ENCODE measurements at regions of chr5 and their contacts with region 1.

Region 1: DNA sequence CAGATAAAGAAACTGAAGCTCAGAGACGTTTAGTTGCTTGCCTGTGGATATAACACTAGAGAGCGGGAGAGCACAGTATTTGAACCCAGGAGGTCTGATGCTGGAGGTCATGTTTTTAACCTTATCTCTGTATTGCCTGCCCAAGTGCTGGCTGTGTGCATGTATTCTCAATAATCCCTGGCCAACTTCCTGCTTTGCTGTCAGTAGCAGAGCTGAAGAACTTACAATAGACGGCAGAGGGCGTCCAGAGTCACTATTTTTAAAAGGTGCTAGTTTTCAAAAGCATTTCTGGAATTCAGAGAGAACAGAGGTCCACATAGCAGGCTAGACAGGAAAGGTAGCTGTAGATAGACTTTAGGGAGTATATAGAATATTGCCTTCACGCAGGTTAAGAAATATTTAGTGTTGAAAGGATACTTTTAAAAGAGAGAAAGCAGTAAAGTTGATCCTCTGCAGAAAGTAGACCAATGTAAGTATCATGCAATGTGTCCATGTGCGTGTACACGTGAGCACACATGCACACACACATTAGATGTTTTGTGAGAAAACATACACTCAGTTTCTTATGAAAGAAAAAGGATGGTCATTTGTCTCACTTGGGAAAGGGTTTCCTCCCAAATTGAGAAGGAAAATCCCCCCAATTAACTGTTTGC is 46.3 kb downstream of the PTCD2 start:
- DNase-seq: no peak
- H3K4me3 ChIP-seq: no peak overlapping the region
- H3K27me3 ChIP-seq: no peaks in the 10 kb centered on the region
- CTCF ChIP-seq: peak; percentile 80

Region 2: GRCh38 chr5:72378636-72379290 is 12.3 kb after region 1 on chr5:
- CTCF ChIA-PET with region 1: interaction called, 24 read pairs
- POLR2A ChIA-PET with region 1: no interaction called
- DNase-seq: no peak
- H3K4me3 ChIP-seq: no peak overlapping the region
- H3K27me3 ChIP-seq: no peaks in the 10 kb centered on the region
- CTCF ChIP-seq: no peak

Region 3: DNA sequence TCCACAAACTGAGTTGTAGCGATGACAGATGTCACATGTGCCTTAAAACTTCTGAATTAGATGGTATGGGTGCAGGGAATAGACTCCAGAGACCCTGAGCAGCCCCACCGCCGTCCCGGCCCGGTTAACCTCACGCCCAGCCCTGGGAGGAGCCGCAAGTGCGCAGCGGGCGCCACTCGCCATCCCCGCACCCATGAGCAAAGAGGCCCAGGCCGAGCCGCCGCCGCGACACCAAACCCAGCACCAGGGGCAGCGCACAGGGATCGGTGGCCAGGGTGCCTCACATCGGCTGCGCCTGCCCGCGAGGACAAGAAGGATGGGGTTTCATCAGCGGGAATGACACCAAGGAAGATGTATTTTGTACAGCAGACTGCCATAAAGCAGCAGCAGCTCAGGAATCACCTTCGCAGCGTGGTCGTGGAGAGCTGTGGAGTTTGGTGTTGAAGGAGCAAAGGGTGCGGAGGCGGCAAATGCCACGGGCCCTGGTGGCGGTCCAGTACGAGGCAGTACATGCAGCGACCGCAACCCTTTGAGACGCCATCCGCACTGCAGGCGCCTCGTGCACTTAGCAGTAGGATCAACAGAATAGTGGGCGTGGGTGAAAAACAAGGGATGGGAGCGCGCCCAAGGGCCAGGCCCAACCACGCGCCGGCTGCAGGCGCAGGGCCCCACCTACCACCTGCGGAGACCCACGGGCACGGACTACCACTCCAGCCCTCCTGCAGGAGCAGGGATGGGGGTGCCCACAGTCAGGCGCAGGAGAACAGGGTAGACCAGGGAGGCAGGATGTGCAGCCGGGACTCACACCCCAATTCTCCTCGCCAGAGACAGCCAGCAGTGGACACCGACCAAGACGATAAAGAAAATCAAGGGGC is 51.1 kb after region 1 on chr5:
- CTCF ChIA-PET with region 1: interaction called, 23 read pairs
- POLR2A ChIA-PET with region 1: no interaction called
- DNase-seq: no peak
- H3K4me3 ChIP-seq: no peak overlapping the region
- H3K27me3 ChIP-seq: no peaks in the 10 kb centered on the region
- CTCF ChIP-seq: no peak

Region 4: GRCh38 chr5:72523960-72524582 is 157.6 kb after region 1 on chr5:
- CTCF ChIA-PET with region 1: interaction called, 65 read pairs
- POLR2A ChIA-PET with region 1: no interaction called
- DNase-seq: peak; percentile 40
- H3K4me3 ChIP-seq: no peak overlapping the region
- H3K27me3 ChIP-seq: no peaks in the 10 kb centered on the region
- CTCF ChIP-seq: peak; percentile 55

Measured in BJ (cell line).